Vagina (tissue), 2 donors: ENCODE measurements at regions of chr2 and their contacts with region 1.

Region 1: DNA sequence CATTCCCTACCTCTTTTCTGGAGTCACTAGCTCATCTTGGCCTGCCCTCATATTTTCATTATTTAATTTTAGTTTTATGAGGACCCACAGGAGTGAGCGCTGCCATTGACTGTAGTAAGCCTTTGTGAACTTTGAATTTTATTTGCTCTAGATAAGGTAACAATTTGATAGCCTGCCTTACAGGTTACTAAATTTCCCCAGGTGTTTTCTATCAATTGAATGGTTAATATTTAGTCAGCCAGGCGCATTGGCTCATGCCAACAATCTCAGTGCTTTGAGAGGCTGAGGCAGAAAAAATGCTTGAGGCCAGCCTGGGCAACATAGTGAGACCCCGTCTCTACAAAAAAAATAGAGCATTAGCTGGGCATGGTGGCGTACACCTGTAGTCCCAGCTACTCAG is 50.2 kb downstream of the DAW1 start:
- DNase-seq: no peak
- H3K4me3 ChIP-seq: no peak overlapping the region
- H3K27ac ChIP-seq: no peak overlapping the region
- H3K4me1 ChIP-seq: no peaks in the 10 kb centered on the region
- H3K27me3 ChIP-seq: no peaks in the 10 kb centered on the region
- CTCF ChIP-seq: no peak
- POLR2A ChIP-seq: no peak

Region 2: DNA sequence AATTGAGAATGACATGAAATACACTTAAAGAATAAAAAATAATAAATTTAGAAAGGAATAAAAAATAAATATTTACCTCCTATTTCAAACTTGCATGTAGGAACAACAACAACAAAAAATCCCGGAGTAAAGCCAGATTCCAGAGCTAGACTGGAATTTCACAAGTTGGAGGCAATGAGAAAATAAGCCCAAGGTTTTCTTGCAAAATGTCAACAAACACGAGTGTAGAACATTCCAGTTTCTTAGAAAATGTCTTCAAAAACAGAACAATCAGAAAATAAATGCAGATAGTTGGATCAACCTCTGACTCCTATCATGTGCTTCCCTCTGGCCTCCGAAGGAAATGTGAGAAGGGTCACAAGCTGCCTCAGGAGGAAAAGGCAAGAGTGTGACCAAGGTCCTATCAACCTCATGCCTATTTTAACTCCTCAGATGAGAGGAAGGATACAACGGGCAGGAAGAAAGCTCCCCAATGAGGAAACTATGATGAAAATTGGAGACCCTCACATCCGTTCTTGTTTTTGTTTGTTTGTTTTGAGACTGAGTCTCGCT is 247.2 kb before region 1 on chr2:
- intact Hi-C with region 1: no loop called
- DNase-seq: no peak
- H3K4me3 ChIP-seq: no peak overlapping the region
- H3K27ac ChIP-seq: no peak overlapping the region
- H3K4me1 ChIP-seq: no peaks in the 10 kb centered on the region
- H3K27me3 ChIP-seq: no peaks in the 10 kb centered on the region
- CTCF ChIP-seq: no peak
- POLR2A ChIP-seq: no peak

Region 3: DNA sequence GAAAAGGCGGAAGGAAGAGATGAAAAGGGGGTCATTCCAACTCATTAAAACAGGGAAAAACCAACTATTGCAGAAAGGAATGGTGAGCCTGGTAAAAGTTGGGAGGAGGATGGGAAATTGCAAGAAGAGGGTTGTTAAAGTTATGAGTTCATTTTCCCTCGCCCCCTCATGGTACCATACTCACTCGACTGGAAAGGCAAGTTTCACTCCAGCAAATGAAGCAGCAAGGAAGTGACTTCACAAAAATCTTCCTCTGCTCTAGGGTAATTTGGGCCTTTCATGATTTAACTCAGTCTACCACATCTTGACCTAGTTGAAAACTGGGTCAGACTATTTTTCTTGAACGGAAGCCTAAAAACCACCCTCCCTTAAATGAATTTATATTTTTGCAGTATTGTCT is 73.1 kb before region 1 on chr2:
- intact Hi-C with region 1: loop called (anchors 2 kb)
- DNase-seq: no peak
- H3K4me3 ChIP-seq: no peak overlapping the region
- H3K27ac ChIP-seq: no peak overlapping the region
- H3K4me1 ChIP-seq: no peaks in the 10 kb centered on the region
- H3K27me3 ChIP-seq: no peaks in the 10 kb centered on the region
- CTCF ChIP-seq: no peak
- POLR2A ChIP-seq: no peak